ENCODE measurements at regions of chr1 and their contacts with region 1.

Region 1: DNA sequence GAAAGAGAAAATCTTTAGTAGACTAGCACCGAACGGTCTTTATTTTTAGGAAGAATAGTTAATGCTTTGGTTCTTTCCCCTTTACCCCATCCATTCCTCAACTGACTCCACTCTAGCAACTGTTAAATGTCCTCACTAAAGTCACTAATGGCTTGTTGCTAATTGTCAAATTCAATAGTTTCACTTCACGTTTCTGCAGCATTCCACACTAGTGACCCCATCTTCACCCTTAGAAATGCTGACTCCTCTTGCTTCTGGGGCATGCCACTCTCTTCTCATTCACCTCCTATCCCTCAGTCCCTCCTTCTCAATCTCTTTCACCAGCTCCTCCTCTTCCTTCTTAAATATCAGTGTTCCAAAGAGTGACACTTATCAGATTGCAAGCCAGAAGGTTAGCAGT is 19.4 kb upstream of the CADM3 start:
- DNase-seq: no peak
- ATAC-seq: no peak
- H3K4me3 ChIP-seq: no peak overlapping the region
- H3K27ac ChIP-seq: no peak overlapping the region
- H3K4me1 ChIP-seq: no peaks in the 10 kb centered on the region
- H3K27me3 ChIP-seq: no peaks in the 10 kb centered on the region
- CTCF ChIP-seq: no peak

Region 2: DNA sequence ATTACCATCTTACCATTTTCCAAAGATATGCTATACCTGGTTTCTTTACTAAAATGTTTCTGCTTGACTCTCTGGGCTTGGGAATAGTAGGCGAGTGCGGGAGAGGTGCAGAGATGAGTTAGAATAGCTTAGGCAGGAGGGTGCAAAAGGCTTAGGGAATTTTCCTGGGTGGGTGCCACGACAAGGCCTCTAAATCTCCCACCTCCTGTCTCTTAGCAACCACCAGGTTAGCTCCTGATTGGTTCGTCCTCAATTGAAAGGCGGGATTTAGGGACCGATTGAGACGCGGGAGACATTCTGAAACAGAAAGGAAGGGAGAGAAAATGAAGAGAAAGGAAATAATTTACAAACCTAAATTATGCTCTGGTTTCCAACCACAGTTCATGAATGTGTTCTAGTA is 55.7 kb after region 1 on chr1:
- intact Hi-C with region 1: loop called in 1 of 3 experiments (anchors 10 kb)
- DNase-seq: no peak
- ATAC-seq: no peak
- H3K4me3 ChIP-seq: no peak overlapping the region
- H3K27ac ChIP-seq: no peak overlapping the region
- H3K4me1 ChIP-seq: peaks cover 0 to 2% (median 0%) of the 10 kb centered on the region in 3 donors
- H3K27me3 ChIP-seq: peaks cover 0 to 8% (median 0%) of the 10 kb centered on the region in 4 donors
- CTCF ChIP-seq: no peak

Measured in pancreas (tissue), 10 donors.